AG04450 (cell line): ENCODE measurements at regions of chr20 and their contacts with region 1.

Region 1: GRCh38 chr20:45293041-45294002 is 13.3 kb upstream of the RBPJL start:
- DNase-seq: no peak
- H3K4me3 ChIP-seq: peak overlapping the region; percentile 58
- H3K27ac ChIP-seq: no peak overlapping the region
- H3K27me3 ChIP-seq: peaks cover 19% of the 10 kb centered on the region
- CTCF ChIP-seq: peak; percentile 94

Region 2: GRCh38 chr20:44495802-44496481 is 797.4 kb before region 1 on chr20:
- CTCF ChIA-PET with region 1: no interaction called
- POLR2A ChIA-PET with region 1: no interaction called
- DNase-seq: peak; percentile 88
- H3K4me3 ChIP-seq: no peak overlapping the region
- H3K27ac ChIP-seq: peak overlapping the region; percentile 89
- H3K27me3 ChIP-seq: no peaks in the 10 kb centered on the region
- CTCF ChIP-seq: no peak

Region 3: GRCh38 chr20:45052698-45053429 is 240.5 kb before region 1 on chr20:
- CTCF ChIA-PET with region 1: interaction called, 18 read pairs
- POLR2A ChIA-PET with region 1: no interaction called
- DNase-seq: no peak
- H3K4me3 ChIP-seq: no peak overlapping the region
- H3K27ac ChIP-seq: peak overlapping the region; percentile 11
- H3K27me3 ChIP-seq: no peaks in the 10 kb centered on the region
- CTCF ChIP-seq: no peak

Region 4: DNA sequence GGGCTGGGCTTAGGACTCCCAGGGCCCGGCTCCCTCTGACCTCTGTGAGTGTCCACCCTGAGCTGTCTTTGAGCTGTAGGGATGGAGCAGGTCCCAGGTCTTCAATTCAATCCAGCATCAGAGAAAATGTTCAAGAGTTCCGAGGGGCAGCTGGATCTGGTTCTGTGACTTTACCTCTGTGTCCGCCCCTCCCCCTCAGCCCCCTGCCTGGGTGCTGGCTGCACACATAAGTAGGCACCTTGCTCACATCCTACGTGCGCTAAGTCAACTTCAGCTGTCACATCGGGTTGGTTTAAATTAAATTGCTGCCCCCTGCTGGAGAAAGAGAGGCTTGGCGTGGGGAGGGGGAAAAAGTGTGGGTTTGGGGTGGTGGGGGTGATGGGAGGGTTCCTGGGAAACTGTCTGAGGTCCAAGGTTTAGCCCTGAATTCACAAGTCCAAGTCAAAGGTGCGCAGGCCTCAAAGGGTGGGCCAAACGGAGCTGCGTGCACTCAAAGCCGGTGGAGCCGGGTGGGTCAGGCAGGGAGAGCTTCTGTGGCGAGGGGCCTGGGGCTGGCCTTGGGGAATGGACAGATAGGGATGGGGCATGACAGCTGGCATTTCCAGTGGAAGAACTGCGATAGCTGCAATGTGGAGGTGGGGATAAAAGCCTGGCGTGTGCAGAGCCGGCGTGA is 181.4 kb before region 1 on chr20:
- CTCF ChIA-PET with region 1: interaction called, 16 read pairs
- POLR2A ChIA-PET with region 1: interaction called, 4 read pairs
- DNase-seq: no peak
- H3K4me3 ChIP-seq: no peak overlapping the region
- H3K27ac ChIP-seq: no peak overlapping the region
- H3K27me3 ChIP-seq: peaks cover 8% of the 10 kb centered on the region
- CTCF ChIP-seq: peak; percentile 51; the same call in 1 of the 2 replicates

Region 5: DNA sequence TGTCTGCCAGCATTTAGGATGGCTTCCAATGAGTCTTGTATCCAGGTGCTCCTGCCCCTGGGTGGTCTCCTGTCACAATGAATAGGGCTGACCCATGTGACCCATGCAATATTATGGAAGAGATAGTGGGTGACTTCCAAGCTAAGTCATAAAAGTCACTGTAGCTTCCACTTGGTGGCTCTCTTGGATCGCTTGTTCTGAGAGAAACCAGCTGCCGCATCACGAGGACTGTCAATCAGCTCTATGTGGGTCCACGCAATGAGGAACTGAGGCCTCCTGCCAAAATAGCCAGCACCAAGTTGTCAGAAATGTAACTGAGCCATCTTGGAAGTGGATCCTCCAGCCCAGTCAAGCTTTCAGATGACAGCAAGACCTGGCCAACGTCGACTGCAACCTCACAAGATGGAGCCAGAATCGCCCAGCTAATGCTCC is 29.6 kb after region 1 on chr20:
- CTCF ChIA-PET with region 1: interaction called, 18 read pairs
- POLR2A ChIA-PET with region 1: no interaction called
- DNase-seq: no peak
- H3K4me3 ChIP-seq: no peak overlapping the region
- H3K27ac ChIP-seq: peak overlapping the region; percentile 31
- H3K27me3 ChIP-seq: no peaks in the 10 kb centered on the region
- CTCF ChIP-seq: no peak

Region 6: DNA sequence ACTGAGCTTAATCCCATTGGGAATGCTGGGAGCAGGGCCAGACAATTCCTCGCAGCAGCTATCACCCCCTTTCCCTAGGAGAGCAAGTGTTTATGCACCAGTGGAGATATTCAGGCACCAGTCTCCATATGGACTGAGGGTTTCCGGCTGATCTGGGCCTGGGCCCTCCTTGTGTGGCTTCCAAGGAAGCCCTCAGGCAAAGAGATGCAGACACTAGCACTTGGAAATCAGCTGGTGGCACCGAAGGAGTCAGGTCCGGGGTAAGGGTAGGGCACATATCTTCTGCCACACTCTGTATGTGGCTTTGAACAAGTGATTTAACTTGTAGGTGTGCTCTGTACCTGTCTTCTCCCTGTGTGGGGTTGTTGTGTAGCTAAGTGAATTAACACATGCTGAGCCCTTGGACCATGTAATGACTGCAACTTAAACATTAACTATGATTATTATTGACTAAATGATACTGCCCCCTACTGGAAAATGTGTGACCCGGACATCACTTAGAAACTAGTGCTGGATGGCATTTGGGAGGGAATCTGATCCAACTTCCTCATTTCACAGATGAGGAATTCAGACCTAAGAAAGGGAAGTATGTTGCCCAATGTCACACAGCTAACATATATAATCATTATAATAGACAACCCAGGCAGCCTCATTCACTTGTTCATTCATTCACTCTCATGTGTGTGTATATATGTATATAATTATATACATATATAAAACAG is 156.9 kb after region 1 on chr20:
- CTCF ChIA-PET with region 1: interaction called, 11 read pairs
- POLR2A ChIA-PET with region 1: no interaction called
- DNase-seq: no peak
- H3K4me3 ChIP-seq: no peak overlapping the region
- H3K27ac ChIP-seq: no peak overlapping the region
- H3K27me3 ChIP-seq: peaks cover 18% of the 10 kb centered on the region
- CTCF ChIP-seq: peak; percentile 62